Upper lobe of right lung (tissue), 1 donor: ENCODE measurements at regions of chr6 and their contacts with region 1.

Region 1: GRCh38 chr6:1381481-1382330 is 7.7 kb upstream of the FOXF2 start:
- DNase-seq: peak; percentile 82
- ATAC-seq: peak; percentile 90
- H3K4me3 ChIP-seq: peak overlapping the region; percentile 49
- H3K27ac ChIP-seq: peak overlapping the region; percentile 76
- H3K4me1 ChIP-seq: peaks cover 25% of the 10 kb centered on the region
- H3K27me3 ChIP-seq: peaks cover 100% of the 10 kb centered on the region
- CTCF ChIP-seq: peak; percentile 83

Region 2: DNA sequence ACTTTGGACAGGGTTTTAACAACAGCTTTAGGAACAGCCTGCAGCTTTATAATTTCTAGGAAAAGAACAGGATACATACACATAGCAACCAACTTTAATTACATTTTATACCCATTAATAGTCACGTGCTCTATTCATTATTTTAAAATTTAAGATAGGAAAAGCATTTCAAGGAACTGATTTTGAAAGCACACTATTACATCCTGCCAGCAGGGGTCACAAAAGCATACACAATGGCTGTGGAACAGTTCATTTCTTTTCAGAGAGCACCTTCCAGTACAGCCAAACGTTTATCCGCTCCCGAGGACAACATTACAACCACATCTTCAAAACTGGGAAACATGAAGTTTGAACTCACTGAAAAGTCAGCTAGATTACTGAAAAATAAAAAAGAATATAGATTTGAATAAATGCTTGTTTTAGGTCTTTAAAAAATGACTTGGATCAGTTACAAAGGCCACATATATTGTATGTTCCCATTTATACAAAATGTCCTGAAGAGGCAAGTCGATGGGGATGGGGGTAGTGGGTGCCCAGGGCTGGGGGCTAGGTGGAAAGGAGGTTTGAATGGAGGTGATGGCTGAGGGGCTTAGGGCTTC is 584.1 kb before region 1 on chr6:
- intact Hi-C with region 1: loop called (anchors 10 kb)
- DNase-seq: no peak
- ATAC-seq: peak; percentile 81
- H3K4me3 ChIP-seq: no peak overlapping the region
- H3K27ac ChIP-seq: no peak overlapping the region
- H3K4me1 ChIP-seq: no peaks in the 10 kb centered on the region
- H3K27me3 ChIP-seq: no peaks in the 10 kb centered on the region
- CTCF ChIP-seq: peak; percentile 79

Region 3: GRCh38 chr6:1263039-1263849 is 118.5 kb before region 1 on chr6:
- intact Hi-C with region 1: no loop called
- DNase-seq: peak; percentile 76
- ATAC-seq: peak; percentile 92
- H3K4me3 ChIP-seq: no peak overlapping the region
- H3K27ac ChIP-seq: no peak overlapping the region
- H3K4me1 ChIP-seq: no peaks in the 10 kb centered on the region
- H3K27me3 ChIP-seq: no peaks in the 10 kb centered on the region
- CTCF ChIP-seq: peak; percentile 36

Region 4: DNA sequence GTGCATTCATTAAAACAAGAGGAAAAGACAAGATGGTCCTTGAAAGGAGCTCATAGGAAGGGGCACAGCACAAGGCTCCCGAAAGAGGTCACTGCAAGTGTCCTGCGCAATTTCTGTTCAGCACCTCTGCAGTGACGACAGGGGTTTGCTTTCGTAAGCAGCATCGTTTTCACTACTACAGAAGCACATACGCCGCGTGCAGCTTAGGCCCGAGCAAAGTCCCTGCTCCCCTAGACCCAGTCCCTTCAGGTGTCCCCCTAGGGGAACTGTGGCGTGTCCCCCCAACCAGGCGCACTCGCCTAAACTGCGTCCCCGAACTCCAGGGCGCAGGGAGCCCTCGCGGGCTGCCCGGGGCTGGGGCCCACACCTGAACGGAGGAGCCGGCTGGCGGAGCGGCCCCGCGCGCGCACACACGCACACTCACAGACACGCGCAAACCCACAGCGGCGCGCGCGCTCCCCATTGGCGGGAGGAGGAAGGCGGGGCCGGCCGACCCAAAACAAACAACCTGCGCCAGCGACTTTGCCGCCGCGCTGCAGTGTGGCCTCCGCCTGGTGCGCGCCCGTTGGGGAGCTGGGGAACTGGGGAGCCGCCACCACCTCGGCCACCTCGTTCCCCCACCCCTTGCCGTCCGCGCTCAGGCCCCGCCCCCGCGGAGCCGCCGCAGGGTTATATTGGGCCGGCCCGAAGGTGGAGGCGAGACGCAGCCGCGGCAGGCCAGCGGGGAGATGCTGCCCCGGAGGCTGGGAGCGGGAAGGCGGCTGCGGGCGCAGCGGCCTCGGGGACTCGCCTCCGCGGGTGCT is 70.1 kb before region 1 on chr6 and contains the start of gene FOXQ1:
- intact Hi-C with region 1: loop called (anchors 10 kb)
- DNase-seq: peak; percentile 95
- ATAC-seq: peak; percentile 90
- H3K4me3 ChIP-seq: peak within 1 kb of the TSS; percentile 58
- H3K27ac ChIP-seq: peak within 1 kb of the TSS; percentile 84
- H3K4me1 ChIP-seq: no peaks in the 10 kb centered on the region
- H3K27me3 ChIP-seq: peaks cover 26% of the 10 kb centered on the region
- CTCF ChIP-seq: no peak
- total RNA-seq, gene FOXQ1: 12.3 TPM

Region 5: DNA sequence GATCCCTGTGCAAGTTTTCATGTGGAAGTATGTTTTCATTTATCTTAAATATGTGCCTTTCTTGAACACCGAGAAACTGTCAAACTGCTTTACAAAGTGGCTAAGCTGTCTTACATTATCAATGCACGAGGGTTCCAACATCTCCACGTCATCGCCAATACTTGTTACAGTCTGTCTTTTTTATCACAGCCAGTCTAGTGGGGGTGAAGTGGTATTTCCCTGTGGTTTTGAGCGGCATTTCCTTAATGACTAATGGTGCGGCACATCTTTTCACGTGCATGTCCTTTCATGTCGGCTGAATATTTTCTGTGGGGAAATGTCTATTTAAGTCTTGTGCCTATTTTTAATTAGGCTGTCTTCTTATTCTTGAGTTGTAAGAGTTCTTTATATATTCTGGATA is 508.4 kb after region 1 on chr6:
- intact Hi-C with region 1: no loop called
- DNase-seq: no peak
- ATAC-seq: no peak
- H3K4me3 ChIP-seq: no peak overlapping the region
- H3K27ac ChIP-seq: no peak overlapping the region
- H3K4me1 ChIP-seq: no peaks in the 10 kb centered on the region
- H3K27me3 ChIP-seq: no peaks in the 10 kb centered on the region
- CTCF ChIP-seq: no peak